A549 (cell line): ENCODE measurements at regions of chr4 and their contacts with region 1.

Region 1: DNA sequence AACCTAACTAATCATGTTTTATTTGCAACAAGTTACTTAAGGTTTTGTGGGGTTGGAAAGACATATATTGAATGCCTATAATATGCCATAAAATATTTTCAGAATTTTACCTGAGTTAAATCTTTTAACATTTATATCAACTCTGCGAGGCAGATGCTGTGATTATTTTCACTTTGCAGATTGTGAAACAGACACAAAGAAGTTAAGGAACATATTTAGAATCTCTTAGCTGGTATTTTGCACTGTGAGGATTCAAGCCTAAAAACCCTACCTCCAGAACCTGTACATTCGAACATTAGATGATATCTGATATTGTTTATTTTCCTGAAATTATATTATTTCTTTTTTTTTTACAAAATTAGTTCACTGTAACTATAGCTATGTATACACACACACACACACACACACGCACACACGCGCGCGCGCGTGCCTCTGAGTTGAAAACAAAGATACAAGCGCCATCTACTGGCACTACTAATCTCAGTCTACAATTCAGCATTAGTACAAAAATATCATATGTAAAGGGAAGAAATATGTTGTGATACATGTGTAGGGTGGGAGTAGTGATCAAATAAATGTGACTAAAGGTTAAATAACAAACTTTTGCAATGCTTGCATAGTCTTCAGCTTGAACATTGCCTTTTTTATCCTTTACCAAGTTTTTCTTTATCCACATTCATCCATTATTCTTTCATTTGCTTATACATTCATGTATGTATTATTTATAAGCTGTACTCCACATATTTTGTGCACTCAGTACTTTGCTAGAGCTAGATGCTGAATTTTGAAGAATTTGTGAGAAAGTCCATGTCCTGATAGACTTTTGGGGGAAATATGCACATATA is 61.5 kb downstream of the ANXA10 start:
- DNase-seq: peak; percentile 30 to 82
- ATAC-seq: peak; percentile 78 to 87
- H3K4me3 ChIP-seq: peak overlapping the region; percentile 36
- H3K27ac ChIP-seq: peak overlapping the region in 1 of 2 experiments; percentile 10; a peak in 1 of 6 replicates
- H3K4me1 ChIP-seq: no peaks in the 10 kb centered on the region
- CTCF ChIP-seq: peak; percentile 86
- EP300 ChIP-seq: no peak
- POLR2A ChIP-seq: no peak
- RAD21 ChIP-seq: peak; percentile 73 to 89

Region 2: GRCh38 chr4:167989815-167990214 is 164.0 kb before region 1 on chr4:
- CTCF ChIA-PET with region 1: interaction called, 21 read pairs
- POLR2A ChIA-PET with region 1: no interaction called
- DNase-seq: peak in 1 of 2 experiments; percentile 1
- ATAC-seq: no peak
- H3K4me3 ChIP-seq: no peak overlapping the region
- H3K27ac ChIP-seq: no peak overlapping the region
- H3K4me1 ChIP-seq: no peaks in the 10 kb centered on the region
- CTCF ChIP-seq: peak; percentile 32; the same call in 1 of the 3 replicates
- EP300 ChIP-seq: no peak
- POLR2A ChIP-seq: no peak
- RAD21 ChIP-seq: peak; percentile 39 to 52; a peak in 4 of 5 replicates

Region 3: DNA sequence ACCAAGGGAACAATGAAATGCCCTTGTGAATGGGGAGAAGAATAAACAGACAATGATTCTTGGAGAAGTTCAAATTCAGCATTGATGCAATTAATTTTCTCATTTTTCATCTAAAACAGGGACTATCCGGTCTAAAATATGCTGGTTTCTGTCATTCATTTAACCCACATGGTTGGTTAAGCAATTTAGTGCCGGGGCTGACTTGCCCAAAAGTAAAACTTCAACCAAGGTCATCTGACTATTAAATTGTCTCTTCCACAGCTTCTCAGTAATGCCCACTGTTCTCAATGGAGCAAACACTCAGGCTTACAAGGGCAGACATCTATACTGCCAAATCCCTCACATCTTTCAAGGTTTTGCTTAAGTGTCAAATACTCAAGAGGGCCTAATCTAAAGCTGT is 10.2 kb before region 1 on chr4:
- CTCF ChIA-PET with region 1: interaction called, 19 read pairs
- POLR2A ChIA-PET with region 1: no interaction called
- DNase-seq: no peak
- ATAC-seq: no peak
- H3K4me3 ChIP-seq: no peak overlapping the region
- H3K27ac ChIP-seq: peak overlapping the region in 1 of 2 experiments; percentile 18; a peak in 1 of 6 replicates
- H3K4me1 ChIP-seq: no peaks in the 10 kb centered on the region
- CTCF ChIP-seq: no peak
- EP300 ChIP-seq: no peak
- POLR2A ChIP-seq: no peak
- RAD21 ChIP-seq: no peak

Region 4: GRCh38 chr4:168279556-168279955 is 125.7 kb after region 1 on chr4:
- CTCF ChIA-PET with region 1: no interaction called
- POLR2A ChIA-PET with region 1: no interaction called
- DNase-seq: no peak
- ATAC-seq: no peak
- H3K4me3 ChIP-seq: no peak overlapping the region
- H3K27ac ChIP-seq: no peak overlapping the region
- H3K4me1 ChIP-seq: no peaks in the 10 kb centered on the region
- CTCF ChIP-seq: no peak
- EP300 ChIP-seq: no peak
- POLR2A ChIP-seq: no peak
- RAD21 ChIP-seq: no peak

Region 5: DNA sequence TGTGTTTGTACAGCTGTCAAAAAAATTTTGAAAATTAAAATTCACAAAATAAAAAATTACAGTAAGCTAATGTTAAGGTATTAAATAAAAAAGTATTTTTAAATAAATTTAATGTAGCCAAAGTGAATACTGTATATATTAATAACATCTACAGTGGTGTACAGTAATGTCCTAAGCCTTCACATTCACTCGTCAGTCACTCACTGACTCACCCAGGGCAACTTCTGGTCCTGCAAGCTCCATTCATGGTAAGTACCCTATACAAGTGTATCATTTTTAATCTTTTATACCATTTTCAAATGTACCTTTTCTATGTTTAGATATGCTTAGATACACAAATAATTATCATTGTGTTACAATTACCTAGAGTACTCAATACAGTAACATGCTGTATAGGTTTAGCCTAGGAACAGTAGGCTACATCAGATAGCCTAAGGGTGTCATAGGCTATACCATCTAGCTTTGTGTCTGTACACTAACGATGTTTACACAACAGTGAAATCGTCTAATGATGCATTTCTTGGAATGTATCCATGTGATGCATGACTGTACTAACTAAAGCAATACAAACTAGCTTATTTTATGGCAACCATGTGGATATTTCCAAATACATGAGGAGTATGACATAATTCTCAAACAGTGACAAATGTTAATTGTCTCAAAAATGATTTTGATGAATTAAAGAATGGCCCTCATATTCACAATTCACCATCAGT is 151.1 kb after region 1 on chr4:
- CTCF ChIA-PET with region 1: no interaction called
- POLR2A ChIA-PET with region 1: no interaction called
- DNase-seq: peak; percentile 24 to 76
- ATAC-seq: peak; percentile 90 to 92
- H3K4me3 ChIP-seq: no peak overlapping the region
- H3K27ac ChIP-seq: peak overlapping the region in 1 of 2 experiments; percentile 53; a peak in 1 of 6 replicates
- H3K4me1 ChIP-seq: peaks cover 18% of the 10 kb centered on the region
- CTCF ChIP-seq: no peak
- EP300 ChIP-seq: no peak
- POLR2A ChIP-seq: no peak
- RAD21 ChIP-seq: no peak

Region 6: DNA sequence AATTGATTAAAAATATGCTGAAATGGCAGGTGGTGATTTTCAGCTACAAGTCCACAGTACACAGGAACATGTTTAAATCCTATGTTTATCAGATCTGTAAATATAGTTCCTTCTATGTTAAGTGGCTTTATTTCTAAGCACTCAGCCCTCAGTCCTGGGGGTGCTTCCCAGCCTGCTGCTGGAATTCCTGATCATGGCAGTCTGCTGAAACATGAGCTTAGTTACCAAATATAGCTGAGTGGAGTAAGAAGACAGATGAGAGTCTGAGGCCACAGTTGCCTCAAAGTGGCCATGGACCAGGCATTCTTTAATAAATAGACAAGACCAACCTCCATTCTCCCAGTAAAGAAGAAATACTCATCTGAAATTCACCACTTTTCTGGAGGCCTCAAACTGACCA is 181.8 kb after region 1 on chr4:
- CTCF ChIA-PET with region 1: no interaction called
- POLR2A ChIA-PET with region 1: no interaction called
- DNase-seq: no peak
- ATAC-seq: no peak
- H3K4me3 ChIP-seq: no peak overlapping the region
- H3K27ac ChIP-seq: no peak overlapping the region
- H3K4me1 ChIP-seq: no peaks in the 10 kb centered on the region
- CTCF ChIP-seq: no peak
- EP300 ChIP-seq: no peak
- POLR2A ChIP-seq: no peak
- RAD21 ChIP-seq: no peak